Motor neuron (in vitro differentiated cells): ENCODE measurements at regions of chr4 and their contacts with region 1.

Region 1: GRCh38 chr4:88533937-88534750 is 10.6 kb upstream of the PYURF start:
- ATAC-seq: peak in 4 of 8 experiments; percentile 46 to 93 (median 92)
- H3K4me3 ChIP-seq: no peak overlapping the region
- H3K27ac ChIP-seq: no peak overlapping the region
- H3K4me1 ChIP-seq: no peaks in the 10 kb centered on the region

Region 2: DNA sequence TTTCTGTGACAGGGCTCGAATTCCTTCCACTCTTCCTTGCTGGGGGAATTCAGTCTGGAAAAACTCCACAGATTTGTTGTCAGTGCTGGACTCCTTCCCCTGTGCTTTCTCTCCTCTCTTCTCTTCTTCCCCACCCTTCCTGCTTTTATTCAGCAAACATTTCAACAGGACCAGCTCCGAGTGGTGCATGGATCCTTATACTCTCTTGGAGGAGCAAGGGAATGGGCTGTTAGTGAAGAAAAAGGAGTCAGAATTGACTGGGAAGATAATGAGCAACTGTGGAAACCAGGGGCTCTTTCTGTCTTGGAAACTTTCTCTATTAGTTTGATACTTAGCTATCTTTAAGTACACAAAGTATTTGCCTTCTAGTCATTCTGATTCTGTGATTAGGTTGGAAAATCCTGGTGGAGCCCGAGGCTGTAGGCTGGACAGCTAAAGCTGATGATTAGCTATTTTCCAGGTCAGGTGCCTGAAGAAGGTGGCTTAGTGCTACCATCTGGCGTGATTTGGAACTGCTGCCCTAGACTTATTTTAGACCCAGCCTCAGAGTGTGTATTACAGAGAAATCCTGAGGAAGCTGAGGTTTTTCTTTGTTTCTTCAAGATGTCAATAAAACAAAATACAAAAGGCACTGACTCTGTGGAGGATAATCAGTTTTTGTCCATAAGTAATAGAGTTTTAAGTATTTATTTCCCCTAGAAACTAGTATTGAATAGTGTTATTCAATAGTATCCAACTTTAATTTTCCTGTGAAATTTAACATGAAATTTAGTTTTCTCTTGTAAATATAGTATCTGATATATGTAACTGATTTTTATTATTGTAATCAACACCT is 125.1 kb after region 1 on chr4:
- in situ Hi-C with region 1: loop called in 3 of 9 experiments (anchors 10 to 25 kb)
- ATAC-seq: peak in 5 of 8 experiments; percentile 51 to 100 (median 96)
- H3K4me3 ChIP-seq: no peak overlapping the region
- H3K27ac ChIP-seq: no peak overlapping the region
- H3K4me1 ChIP-seq: no peaks in the 10 kb centered on the region